Activated B cell treated with CpG ODN at 0.5 μM for 24 hours (primary cell): ENCODE measurements at regions of chr6 and their contacts with region 1.

Region 1: DNA sequence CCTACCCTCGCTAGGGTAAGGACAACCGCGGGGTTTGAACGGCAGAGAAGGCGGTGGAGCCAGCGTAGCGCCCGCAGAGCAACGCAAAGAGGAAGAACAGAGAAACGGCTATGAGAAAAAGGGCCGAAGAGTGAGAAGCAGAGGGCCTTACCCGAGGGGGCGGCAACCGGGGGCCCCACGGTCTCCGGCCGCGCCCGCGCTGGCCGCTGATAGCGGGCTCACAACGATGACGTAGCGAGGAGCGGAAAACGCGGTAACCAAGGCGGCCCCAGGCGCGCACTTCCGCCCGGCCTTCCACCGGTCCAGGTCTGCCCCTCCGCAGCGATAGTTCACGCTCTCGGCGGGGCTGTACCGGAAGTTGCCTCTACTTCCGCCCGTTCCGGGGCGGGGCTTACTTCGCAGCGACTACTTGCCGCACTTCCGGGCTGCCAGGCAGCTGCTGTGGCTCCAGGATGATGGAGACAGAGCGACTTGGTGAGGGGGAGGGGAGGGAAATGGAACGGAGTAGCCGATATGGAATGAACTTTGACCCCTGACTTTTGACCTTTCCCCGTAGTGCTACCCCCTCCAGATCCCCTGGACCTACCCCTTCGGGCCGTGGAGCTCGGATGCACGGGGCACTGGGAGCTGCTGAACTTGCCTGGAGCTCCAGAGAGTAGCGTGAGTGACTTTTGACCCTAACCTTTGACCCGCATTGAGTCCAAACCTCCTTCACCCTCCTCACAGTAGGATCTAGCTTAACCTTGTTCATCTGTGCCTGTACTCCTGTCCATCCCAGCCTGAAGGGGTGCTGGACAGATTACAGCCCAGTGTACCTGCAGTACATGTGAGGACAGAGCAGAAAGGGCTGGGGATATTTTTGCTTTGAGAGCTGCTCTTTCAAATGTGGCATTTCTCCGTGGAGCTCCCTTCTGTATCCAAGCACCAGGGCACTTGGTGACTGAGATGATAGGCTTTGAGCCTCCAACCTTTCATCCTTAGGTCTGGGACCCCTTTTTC is at the starts of genes NELFE and SKIC2:
- DNase-seq: peak; percentile 96
- ATAC-seq: peak; percentile 98
- H3K4me3 Mint-ChIP-seq: peak within 1 kb of the TSS; percentile 95
- H3K27ac Mint-ChIP-seq: peak within 1 kb of the TSS; percentile 94
- H3K4me1 Mint-ChIP-seq: peaks cover 33% of the 10 kb centered on the region
- H3K27me3 Mint-ChIP-seq: no peaks in the 10 kb centered on the region
- CTCF ChIP-seq: no peak
- total RNA-seq, gene NELFE: 57.9 and 63.3 TPM in 2 replicates
- total RNA-seq, gene SKIC2: 95.8 and 102 TPM in 2 replicates

Region 2: GRCh38 chr6:31971993-31972708 is 13.1 kb after region 1 on chr6 and contains the start of gene DXO:
- CTCF ChIA-PET with region 1: interaction called, 4 read pairs
- POLR2A ChIA-PET with region 1: interaction called, 113 read pairs
- intact Hi-C with region 1: loop called (anchors 1 kb)
- DNase-seq: peak; percentile 96
- ATAC-seq: peak; percentile 89
- H3K4me3 Mint-ChIP-seq: peak within 1 kb of the TSS; percentile 98
- H3K27ac Mint-ChIP-seq: peak within 1 kb of the TSS; percentile 100
- H3K4me1 Mint-ChIP-seq: peaks cover 39% of the 10 kb centered on the region
- H3K27me3 Mint-ChIP-seq: no peaks in the 10 kb centered on the region
- CTCF ChIP-seq: no peak
- total RNA-seq, gene DXO: 23.7 and 29.4 TPM in 2 replicates